Transverse colon (tissue), 4 donors: ENCODE measurements at regions of chr9 and their contacts with region 1.

Region 1: GRCh38 chr9:81125446-81126092 is 563.8 kb downstream of the TLE1 start:
- DNase-seq: no peak
- H3K4me3 ChIP-seq: no peak overlapping the region
- H3K27ac ChIP-seq: no peak overlapping the region
- H3K4me1 ChIP-seq: no peaks in the 10 kb centered on the region
- H3K27me3 ChIP-seq: no peaks in the 10 kb centered on the region
- CTCF ChIP-seq: no peak
- EP300 ChIP-seq: no peak
- POLR2A ChIP-seq: no peak

Region 2: DNA sequence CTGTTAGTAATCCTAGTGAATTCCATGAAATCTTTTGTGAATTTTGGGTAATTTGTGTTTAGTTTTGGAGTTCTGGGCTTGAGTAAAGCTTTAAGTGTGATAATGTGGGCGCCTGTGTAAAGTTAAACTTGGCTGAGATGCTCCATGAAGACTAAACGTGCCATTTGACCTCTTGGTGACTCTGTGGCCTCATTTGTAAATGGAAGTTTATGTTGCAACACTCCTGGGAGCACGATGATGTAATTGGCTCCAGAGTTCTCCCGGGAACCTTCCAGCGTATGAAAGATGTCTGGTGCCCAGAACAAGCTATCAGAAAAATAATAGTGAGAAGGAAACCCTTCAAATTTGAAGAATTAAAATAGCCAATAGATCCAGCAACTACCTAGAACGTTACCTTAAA is 572.6 kb before region 1 on chr9:
- in situ Hi-C with region 1: loop called in 1 of 4 experiments (anchors 25 kb)
- intact Hi-C with region 1: no loop called
- DNase-seq: peak; percentile 7
- H3K4me3 ChIP-seq: no peak overlapping the region
- H3K27ac ChIP-seq: no peak overlapping the region
- H3K4me1 ChIP-seq: no peaks in the 10 kb centered on the region
- H3K27me3 ChIP-seq: no peaks in the 10 kb centered on the region
- CTCF ChIP-seq: no peak
- EP300 ChIP-seq: no peak
- POLR2A ChIP-seq: no peak

Region 3: DNA sequence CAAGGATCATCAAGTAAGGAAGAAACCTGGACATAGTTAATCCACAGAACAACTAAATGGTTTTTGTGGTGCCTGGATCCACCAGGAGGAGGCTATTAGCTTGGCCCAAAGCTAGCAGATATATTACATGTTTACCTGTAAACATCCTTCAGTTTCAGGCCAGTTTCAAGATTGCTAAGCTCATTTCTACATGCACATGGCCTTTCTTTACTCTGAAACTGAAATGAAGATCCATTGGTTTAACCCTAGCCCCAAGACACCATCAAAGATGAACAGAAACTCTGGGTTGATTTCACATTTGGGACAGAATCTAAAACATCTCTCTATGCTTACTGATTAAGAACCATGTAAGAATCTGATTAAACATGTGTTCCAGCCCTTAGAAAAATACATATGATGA is 48.0 kb before region 1 on chr9:
- in situ Hi-C with region 1: no loop called
- intact Hi-C with region 1: no loop called
- DNase-seq: no peak
- H3K4me3 ChIP-seq: no peak overlapping the region
- H3K27ac ChIP-seq: no peak overlapping the region
- H3K4me1 ChIP-seq: no peaks in the 10 kb centered on the region
- H3K27me3 ChIP-seq: no peaks in the 10 kb centered on the region
- CTCF ChIP-seq: no peak
- EP300 ChIP-seq: no peak
- POLR2A ChIP-seq: no peak